GM12878 (cell line): ENCODE measurements at regions of chr3 and their contacts with region 1.

Region 1: GRCh38 chr3:98602078-98602678 is 8.8 kb upstream of the CPOX start:
- DNase-seq: peak; percentile 55
- ATAC-seq: peak; percentile 90
- H3K4me3 ChIP-seq: no peak overlapping the region
- H3K27ac ChIP-seq: no peak overlapping the region
- H3K4me1 ChIP-seq: peaks cover 12% of the 10 kb centered on the region
- H3K27me3 ChIP-seq: no peaks in the 10 kb centered on the region
- CTCF ChIP-seq: peak; percentile 73 to 83 (median 81); a peak in 5 of 6 replicates
- EP300 ChIP-seq: no peak
- POLR2A ChIP-seq: no peak
- RAD21 ChIP-seq: peak; percentile 99

Region 2: DNA sequence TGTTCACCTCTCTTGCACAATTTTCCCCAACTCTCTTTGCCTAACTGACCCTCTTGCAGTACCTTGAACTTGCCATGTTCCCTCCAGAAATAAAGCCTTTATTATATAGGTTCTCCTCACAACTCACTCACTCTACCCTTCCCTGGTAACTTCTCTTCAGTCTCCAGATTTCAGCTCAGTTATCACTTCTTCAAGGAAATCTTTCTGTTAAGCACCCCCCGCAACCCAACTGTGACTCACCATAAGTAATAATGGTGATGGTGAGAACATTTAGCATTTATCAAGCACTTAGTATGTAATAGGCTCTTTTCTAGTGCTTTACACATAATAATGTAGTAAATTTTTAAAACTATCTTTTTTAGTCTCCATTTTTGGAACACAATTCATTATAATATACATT is 147.2 kb before region 1 on chr3:
- CTCF ChIA-PET with region 1: no interaction called
- POLR2A ChIA-PET with region 1: no interaction called
- RAD21 ChIA-PET with region 1: no interaction called
- SMC1A ChIA-PET with region 1: no interaction called
- in situ Hi-C with region 1: no loop called
- intact Hi-C with region 1: no loop called
- DNase-seq: no peak
- ATAC-seq: no peak
- H3K4me3 ChIP-seq: no peak overlapping the region
- H3K27ac ChIP-seq: no peak overlapping the region
- H3K4me1 ChIP-seq: no peaks in the 10 kb centered on the region
- H3K27me3 ChIP-seq: no peaks in the 10 kb centered on the region
- CTCF ChIP-seq: no peak
- EP300 ChIP-seq: no peak
- POLR2A ChIP-seq: no peak
- RAD21 ChIP-seq: no peak

Region 3: GRCh38 chr3:98612587-98612986 is 10.4 kb after region 1 on chr3:
- CTCF ChIA-PET with region 1: interaction called, 72 read pairs
- POLR2A ChIA-PET with region 1: interaction called, 4 read pairs
- RAD21 ChIA-PET with region 1: interaction called, 38 read pairs
- SMC1A ChIA-PET with region 1: interaction called, 66 read pairs
- in situ Hi-C with region 1: no loop called
- intact Hi-C with region 1: loop called (anchors 1 kb)
- DNase-seq: no peak
- ATAC-seq: peak; percentile 83
- H3K4me3 ChIP-seq: no peak overlapping the region
- H3K27ac ChIP-seq: peak overlapping the region; percentile 80
- H3K4me1 ChIP-seq: peaks cover 7% of the 10 kb centered on the region; the same call in 1 of the 2 replicates
- H3K27me3 ChIP-seq: no peaks in the 10 kb centered on the region
- CTCF ChIP-seq: peak; percentile 16 to 42 (median 39); a peak in 3 of 6 replicates
- EP300 ChIP-seq: no peak
- POLR2A ChIP-seq: no peak
- RAD21 ChIP-seq: peak; percentile 54; the same call in 1 of the 2 replicates

Region 4: GRCh38 chr3:98657457-98657856 is 55.3 kb after region 1 on chr3:
- CTCF ChIA-PET with region 1: interaction called, 53 read pairs
- POLR2A ChIA-PET with region 1: interaction called, 5 read pairs
- RAD21 ChIA-PET with region 1: interaction called, 51 read pairs
- SMC1A ChIA-PET with region 1: interaction called, 62 read pairs
- in situ Hi-C with region 1: no loop called
- intact Hi-C with region 1: loop called (anchors 1 kb)
- DNase-seq: no peak
- ATAC-seq: peak; percentile 98
- H3K4me3 ChIP-seq: no peak overlapping the region; the same call in 1 of the 2 replicates
- H3K27ac ChIP-seq: no peak overlapping the region
- H3K4me1 ChIP-seq: peaks cover 3% of the 10 kb centered on the region
- H3K27me3 ChIP-seq: no peaks in the 10 kb centered on the region
- CTCF ChIP-seq: peak; percentile 62 to 71 (median 70)
- EP300 ChIP-seq: no peak
- POLR2A ChIP-seq: no peak
- RAD21 ChIP-seq: peak; percentile 73

Region 5: GRCh38 chr3:98732286-98733052 is 130.3 kb after region 1 on chr3:
- CTCF ChIA-PET with region 1: interaction called, 42 read pairs
- POLR2A ChIA-PET with region 1: interaction called, 5 read pairs
- RAD21 ChIA-PET with region 1: interaction called, 31 read pairs
- SMC1A ChIA-PET with region 1: interaction called, 27 read pairs
- in situ Hi-C with region 1: no loop called
- intact Hi-C with region 1: loop called (anchors 1 kb)
- DNase-seq: no peak
- ATAC-seq: peak; percentile 52
- H3K4me3 ChIP-seq: peak overlapping the region; percentile 80
- H3K27ac ChIP-seq: peak overlapping the region; percentile 60
- H3K4me1 ChIP-seq: no peaks in the 10 kb centered on the region
- H3K27me3 ChIP-seq: no peaks in the 10 kb centered on the region
- CTCF ChIP-seq: no peak
- EP300 ChIP-seq: no peak
- POLR2A ChIP-seq: peak; percentile 81
- RAD21 ChIP-seq: no peak

Region 6: DNA sequence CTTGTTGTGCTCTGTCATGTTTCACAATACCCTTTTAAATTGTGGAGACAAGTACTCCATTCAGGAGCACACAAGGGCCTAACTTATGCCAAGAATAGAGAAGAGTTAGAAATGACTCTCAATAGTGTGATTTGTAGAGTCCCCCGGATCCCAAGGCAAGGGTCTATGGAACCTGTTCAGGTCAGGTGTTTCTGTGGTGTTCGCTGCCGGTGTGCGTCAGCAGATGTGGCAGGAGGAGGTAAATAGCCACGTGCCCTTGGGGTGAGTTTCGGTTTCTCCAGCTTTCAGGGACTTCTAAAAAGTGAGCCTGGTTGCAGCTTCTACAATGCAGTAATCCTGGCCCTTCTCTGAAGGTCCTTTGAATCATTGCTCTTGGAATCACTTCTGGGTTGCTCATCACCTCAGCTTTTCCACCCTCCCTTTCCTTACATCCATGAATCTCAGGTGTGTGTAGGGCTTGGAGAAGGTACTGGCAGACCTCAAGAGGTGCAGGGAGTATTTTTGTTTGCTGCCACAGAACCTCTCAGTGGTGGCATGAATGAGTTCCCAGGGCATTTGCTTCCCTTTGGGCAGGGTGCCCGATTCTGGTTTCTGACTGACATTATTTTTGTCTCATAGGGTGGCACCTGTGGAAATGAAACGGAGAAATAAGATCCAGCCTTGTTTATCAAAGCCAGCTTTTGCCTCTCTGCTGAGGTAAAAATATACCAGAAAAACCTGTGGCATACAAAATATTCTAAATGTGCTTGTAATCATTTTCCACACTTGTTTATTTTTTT is 168.3 kb after region 1 on chr3:
- CTCF ChIA-PET with region 1: interaction called, 16 read pairs
- POLR2A ChIA-PET with region 1: no interaction called
- RAD21 ChIA-PET with region 1: interaction called, 4 read pairs
- SMC1A ChIA-PET with region 1: interaction called, 14 read pairs
- in situ Hi-C with region 1: no loop called
- intact Hi-C with region 1: no loop called
- DNase-seq: peak; percentile 53
- ATAC-seq: peak; percentile 95
- H3K4me3 ChIP-seq: 0 out of 2 replicates have a peak overlapping the region, but pooled peaks have one; percentile 5
- H3K27ac ChIP-seq: peak overlapping the region; percentile 62
- H3K4me1 ChIP-seq: peaks cover 10% of the 10 kb centered on the region
- H3K27me3 ChIP-seq: no peaks in the 10 kb centered on the region
- CTCF ChIP-seq: no peak
- EP300 ChIP-seq: peak; percentile 68 to 79; a peak in 3 of 4 replicates
- POLR2A ChIP-seq: no peak
- RAD21 ChIP-seq: no peak

Region 7: GRCh38 chr3:98817547-98818041 is 215.4 kb after region 1 on chr3:
- CTCF ChIA-PET with region 1: interaction called, 373 read pairs
- POLR2A ChIA-PET with region 1: interaction called, 4 read pairs
- RAD21 ChIA-PET with region 1: interaction called, 224 read pairs
- SMC1A ChIA-PET with region 1: interaction called, 408 read pairs
- in situ Hi-C with region 1: loop called (anchors 5 kb)
- intact Hi-C with region 1: loop called (anchors 1 kb)
- DNase-seq: no peak
- ATAC-seq: peak; percentile 96
- H3K4me3 ChIP-seq: no peak overlapping the region
- H3K27ac ChIP-seq: no peak overlapping the region
- H3K4me1 ChIP-seq: no peaks in the 10 kb centered on the region
- H3K27me3 ChIP-seq: no peaks in the 10 kb centered on the region
- CTCF ChIP-seq: peak; percentile 47 to 64 (median 61); a peak in 5 of 6 replicates
- EP300 ChIP-seq: no peak
- POLR2A ChIP-seq: no peak
- RAD21 ChIP-seq: peak; percentile 73